Mammary epithelial cell (primary cell): ENCODE measurements at regions of chr6 and their contacts with region 1.

Region 1: DNA sequence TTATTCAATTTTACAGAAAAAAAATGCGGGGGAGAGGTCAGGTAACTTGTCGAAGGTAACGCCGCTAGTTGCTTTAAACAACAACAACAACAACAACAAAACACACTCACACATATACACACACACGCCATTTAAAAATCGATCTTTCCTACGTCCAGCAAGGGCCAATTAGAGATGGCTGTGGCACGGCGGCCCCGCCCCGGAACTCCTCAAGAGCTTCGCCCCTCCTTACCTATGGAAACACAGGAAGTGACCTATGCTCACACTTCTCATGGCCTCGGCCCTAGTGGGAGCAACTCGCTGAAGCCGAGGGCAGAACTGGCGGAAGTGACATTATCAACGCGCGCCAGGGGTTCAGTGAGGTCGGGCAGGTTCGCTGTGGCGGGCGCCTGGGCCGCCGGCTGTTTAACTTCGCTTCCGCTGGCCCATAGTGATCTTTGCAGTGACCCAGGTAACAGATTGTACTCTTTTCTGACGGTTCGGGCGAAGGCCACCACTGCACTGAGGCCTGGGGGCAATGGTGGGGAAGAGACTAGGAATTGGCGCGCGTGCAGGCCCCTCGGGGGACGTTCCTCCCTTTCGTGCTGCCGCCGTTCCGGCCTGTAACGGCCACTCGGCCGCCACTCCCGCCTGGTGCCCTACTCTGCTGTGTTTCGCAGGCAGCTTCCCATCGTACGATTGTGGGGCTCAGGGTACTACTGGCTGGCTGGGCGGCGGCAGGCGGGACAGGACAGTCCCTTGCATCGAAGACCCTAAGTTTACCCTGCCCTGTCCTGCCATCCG is at the start of gene TBP:
- DNase-seq: peak; percentile 99
- H3K4me3 ChIP-seq: peak within 1 kb of the TSS; percentile 64 to 100 (median 86)
- H3K27ac ChIP-seq: peak within 1 kb of the TSS; percentile 90
- H3K4me1 ChIP-seq: peaks cover 29% of the 10 kb centered on the region
- H3K27me3 ChIP-seq: no peaks in the 10 kb centered on the region
- CTCF ChIP-seq: no peak
- total RNA-seq, gene TBP: 16.8 to 18.7 TPM

Region 2: DNA sequence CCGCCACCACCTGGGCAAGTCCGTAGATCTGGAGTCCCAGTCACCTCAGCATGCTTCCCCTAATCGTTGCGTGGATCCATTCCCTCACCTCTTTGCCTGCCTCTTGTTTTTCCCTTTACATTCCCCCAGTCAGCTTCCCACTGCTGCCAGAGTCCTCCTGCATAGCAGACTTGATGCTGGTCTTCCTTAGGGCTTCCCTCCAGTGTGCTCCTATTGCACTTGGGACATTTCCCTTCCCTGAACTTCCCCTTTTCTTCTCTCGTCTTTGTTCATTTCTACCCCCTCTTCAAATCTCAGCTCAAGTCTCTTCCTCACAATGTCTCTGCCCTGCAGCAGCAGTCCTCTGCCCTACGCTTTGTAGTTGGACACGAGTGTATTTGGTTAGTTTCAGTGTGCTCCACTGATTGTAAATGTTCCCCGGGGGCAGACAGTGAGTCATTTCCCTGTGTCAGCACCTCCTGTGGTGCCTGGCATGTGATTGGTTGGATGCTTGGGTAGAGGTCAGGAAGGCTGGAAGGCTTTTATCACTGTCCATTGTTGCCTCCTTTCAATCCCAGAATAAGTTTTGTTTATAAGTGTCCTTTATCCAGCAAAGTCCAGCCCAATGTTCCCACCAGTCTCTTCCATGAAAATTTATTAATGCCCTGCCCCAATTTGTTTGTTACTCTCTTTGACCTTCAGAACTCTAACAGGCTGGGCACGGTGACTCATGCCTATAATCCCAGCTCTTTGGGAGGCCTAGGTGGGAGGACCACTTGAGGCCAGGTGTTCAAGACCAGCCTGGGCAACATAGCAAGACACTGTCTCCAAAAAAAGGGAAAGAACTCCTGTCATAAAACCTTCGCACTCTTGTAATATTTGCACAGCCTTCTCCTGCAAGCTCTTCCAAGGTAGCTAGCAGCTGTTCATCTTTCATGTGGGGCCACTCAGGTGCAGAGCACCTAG is 209.3 kb before region 1 on chr6:
- CTCF ChIA-PET with region 1: no interaction called
- dilution Hi-C with region 1: no loop called
- in situ Hi-C with region 1: no loop called
- intact Hi-C with region 1: no loop called
- DNase-seq: peak; percentile 72
- H3K4me3 ChIP-seq: no peak overlapping the region
- H3K27ac ChIP-seq: no peak overlapping the region
- H3K4me1 ChIP-seq: peaks cover 14% of the 10 kb centered on the region
- H3K27me3 ChIP-seq: no peaks in the 10 kb centered on the region
- CTCF ChIP-seq: no peak

Region 3: GRCh38 chr6:170542031-170542719 is 12.0 kb before region 1 on chr6:
- CTCF ChIA-PET with region 1: no interaction called
- dilution Hi-C with region 1: no loop called
- in situ Hi-C with region 1: no loop called
- intact Hi-C with region 1: loop called (anchors 1 kb)
- DNase-seq: peak; percentile 88
- H3K4me3 ChIP-seq: peak overlapping the region in 1 of 3 experiments; percentile 0
- H3K27ac ChIP-seq: peak overlapping the region; percentile 76
- H3K4me1 ChIP-seq: peaks cover 26% of the 10 kb centered on the region
- H3K27me3 ChIP-seq: no peaks in the 10 kb centered on the region
- CTCF ChIP-seq: no peak

Region 4: GRCh38 chr6:170572704-170573466 is 18.7 kb after region 1 on chr6:
- CTCF ChIA-PET with region 1: no interaction called
- dilution Hi-C with region 1: no loop called
- in situ Hi-C with region 1: no loop called
- intact Hi-C with region 1: loop called (anchors 2 kb)
- DNase-seq: no peak
- H3K4me3 ChIP-seq: no peak overlapping the region
- H3K27ac ChIP-seq: no peak overlapping the region
- H3K4me1 ChIP-seq: no peaks in the 10 kb centered on the region
- H3K27me3 ChIP-seq: no peaks in the 10 kb centered on the region
- CTCF ChIP-seq: no peak

Region 5: DNA sequence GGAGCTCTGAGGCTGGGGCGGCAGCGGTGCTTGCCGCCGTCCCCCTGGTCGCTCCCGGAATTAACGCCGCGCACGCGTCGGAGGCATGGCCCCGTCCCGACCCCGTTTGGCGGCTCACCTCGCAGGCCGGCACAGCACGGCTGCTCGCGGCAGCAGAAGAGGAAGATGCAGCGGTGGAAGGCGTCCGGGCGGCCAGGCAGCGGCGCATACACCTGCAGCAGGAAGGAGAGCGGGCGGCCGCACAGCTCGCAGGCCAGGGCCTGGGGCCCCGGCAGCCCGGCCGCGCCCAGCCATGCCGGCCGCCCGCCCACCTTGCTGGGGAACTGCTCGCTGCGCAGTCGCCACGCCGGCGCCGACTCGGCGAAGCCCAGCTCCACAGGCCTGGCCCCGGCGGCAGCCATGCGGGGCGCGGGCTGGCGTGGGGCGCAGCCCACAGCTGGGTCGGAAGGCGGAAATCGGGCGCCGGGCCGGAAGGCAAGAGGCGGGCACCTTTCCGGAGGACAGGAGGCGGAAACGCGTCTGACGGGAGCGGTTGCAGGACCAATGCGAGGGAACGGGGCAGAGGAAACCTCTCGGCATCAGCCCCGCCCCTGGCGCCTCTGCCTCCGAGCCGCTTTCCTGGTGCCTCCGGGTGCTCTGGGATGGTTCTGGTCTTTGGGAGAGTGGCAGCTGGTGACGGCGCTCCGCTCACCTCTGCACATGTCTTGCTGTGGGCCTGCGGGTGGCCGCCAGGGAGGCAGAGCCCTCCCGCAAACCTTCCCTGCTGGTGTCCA is 30.2 kb after region 1 on chr6 and contains the start of gene PDCD2:
- CTCF ChIA-PET with region 1: no interaction called
- dilution Hi-C with region 1: no loop called
- in situ Hi-C with region 1: no loop called
- intact Hi-C with region 1: loop called (anchors 1 kb)
- DNase-seq: peak; percentile 89
- H3K4me3 ChIP-seq: peak within 1 kb of the TSS; percentile 95 to 99 (median 96)
- H3K27ac ChIP-seq: peak within 1 kb of the TSS; percentile 29
- H3K4me1 ChIP-seq: peaks cover 20% of the 10 kb centered on the region
- H3K27me3 ChIP-seq: no peaks in the 10 kb centered on the region
- CTCF ChIP-seq: peak in 1 of 2 donors; percentile 0
- total RNA-seq, gene PDCD2: 63.2 TPM

Region 6: GRCh38 chr6:170605574-170606259 is 51.5 kb after region 1 on chr6:
- CTCF ChIA-PET with region 1: no interaction called
- dilution Hi-C with region 1: no loop called
- in situ Hi-C with region 1: no loop called
- intact Hi-C with region 1: no loop called
- DNase-seq: no peak
- H3K4me3 ChIP-seq: no peak overlapping the region
- H3K27ac ChIP-seq: no peak overlapping the region
- H3K4me1 ChIP-seq: no peaks in the 10 kb centered on the region
- H3K27me3 ChIP-seq: peaks cover 7% of the 10 kb centered on the region
- CTCF ChIP-seq: no peak